Prostate gland (tissue), 2 donors: ENCODE measurements at regions of chr16 and their contacts with region 1.

Region 1: GRCh38 chr16:21300309-21301167 is 22.4 kb upstream of the CRYM start:
- DNase-seq: peak; percentile 99
- H3K4me3 ChIP-seq: peak overlapping the region; percentile 41 to 59
- H3K27ac ChIP-seq: peak overlapping the region; percentile 75 to 81
- H3K4me1 ChIP-seq: no peaks in the 10 kb centered on the region
- H3K27me3 ChIP-seq: no peaks in the 10 kb centered on the region
- CTCF ChIP-seq: peak; percentile 54 to 98 (median 91)
- POLR2A ChIP-seq: peak; percentile 78

Region 2: DNA sequence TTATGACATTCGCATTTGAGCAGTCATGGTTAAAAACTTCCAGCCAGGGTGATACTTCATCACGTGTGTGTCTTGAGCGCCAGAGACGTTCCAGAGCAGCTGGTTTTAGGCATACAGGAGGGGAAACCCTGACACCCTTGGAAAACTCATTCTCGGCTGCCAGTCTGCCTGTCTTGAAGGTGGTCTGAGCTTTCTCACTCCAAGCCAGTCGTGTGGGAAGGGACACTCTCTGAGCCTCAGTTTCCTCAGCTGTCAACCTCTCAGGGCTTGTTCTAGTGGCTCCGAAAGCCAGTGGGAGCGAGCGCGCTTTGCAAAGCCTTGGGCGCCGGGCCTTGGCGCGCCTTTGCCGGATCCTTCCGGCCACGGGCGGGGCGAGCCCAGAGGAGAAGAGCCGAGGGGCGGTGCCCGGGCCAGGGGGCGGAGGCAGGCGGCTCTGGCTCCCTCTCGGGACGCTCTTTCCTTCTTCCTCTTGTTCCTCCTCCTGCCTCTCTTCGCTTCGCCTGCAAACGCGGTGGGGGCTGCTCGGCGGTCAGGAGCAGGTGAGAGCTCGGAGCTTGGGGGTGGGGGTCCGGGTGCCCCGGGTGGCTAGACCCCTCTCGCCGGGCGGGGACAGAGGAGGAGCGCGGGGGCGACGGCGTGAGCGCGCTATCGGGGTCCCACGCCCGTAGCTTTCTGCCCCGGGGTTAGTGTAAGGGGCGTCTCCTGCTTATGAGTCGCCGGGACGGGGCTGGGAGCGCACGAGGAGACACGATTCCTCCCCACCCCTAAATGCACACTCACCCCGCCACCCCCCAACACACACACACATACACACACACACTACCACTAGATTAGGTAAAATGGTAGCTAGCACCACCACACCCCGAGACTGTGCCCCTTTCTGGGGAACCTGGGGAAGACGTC is 142.1 kb before region 1 on chr16 and contains the start of gene LDAF1:
- intact Hi-C with region 1: loop called (anchors 2 kb)
- DNase-seq: peak; percentile 87
- H3K4me3 ChIP-seq: peak within 1 kb of the TSS; percentile 64
- H3K27ac ChIP-seq: peak within 1 kb of the TSS; percentile 84 to 88
- H3K4me1 ChIP-seq: peaks cover 5% of the 10 kb centered on the region
- H3K27me3 ChIP-seq: no peaks in the 10 kb centered on the region
- CTCF ChIP-seq: peak in 2 of 4 experiments; percentile 26
- POLR2A ChIP-seq: peak; percentile 89
- total RNA-seq, gene LDAF1: 97.5 to 180 TPM

Region 3: GRCh38 chr16:21184834-21185233 is 115.7 kb before region 1 on chr16:
- intact Hi-C with region 1: loop called (anchors 10 kb)
- DNase-seq: no peak
- H3K4me3 ChIP-seq: no peak overlapping the region
- H3K27ac ChIP-seq: no peak overlapping the region
- H3K4me1 ChIP-seq: no peaks in the 10 kb centered on the region
- H3K27me3 ChIP-seq: no peaks in the 10 kb centered on the region
- CTCF ChIP-seq: no peak
- POLR2A ChIP-seq: no peak

Region 4: GRCh38 chr16:22677024-22677830 is 1376.7 kb after region 1 on chr16:
- intact Hi-C with region 1: loop called (anchors 5 kb)
- DNase-seq: no peak
- H3K4me3 ChIP-seq: no peak overlapping the region
- H3K27ac ChIP-seq: no peak overlapping the region
- H3K4me1 ChIP-seq: no peaks in the 10 kb centered on the region
- H3K27me3 ChIP-seq: no peaks in the 10 kb centered on the region
- CTCF ChIP-seq: no peak
- POLR2A ChIP-seq: no peak